AG04450 (cell line): ENCODE measurements at regions of chr20 and their contacts with region 1.

Region 1: GRCh38 chr20:49245921-49246740 is 26.9 kb downstream of the DDX27 start:
- DNase-seq: peak; percentile 20
- H3K4me3 ChIP-seq: no peak overlapping the region
- H3K27ac ChIP-seq: no peak overlapping the region
- H3K27me3 ChIP-seq: no peaks in the 10 kb centered on the region
- CTCF ChIP-seq: peak; percentile 89

Region 2: DNA sequence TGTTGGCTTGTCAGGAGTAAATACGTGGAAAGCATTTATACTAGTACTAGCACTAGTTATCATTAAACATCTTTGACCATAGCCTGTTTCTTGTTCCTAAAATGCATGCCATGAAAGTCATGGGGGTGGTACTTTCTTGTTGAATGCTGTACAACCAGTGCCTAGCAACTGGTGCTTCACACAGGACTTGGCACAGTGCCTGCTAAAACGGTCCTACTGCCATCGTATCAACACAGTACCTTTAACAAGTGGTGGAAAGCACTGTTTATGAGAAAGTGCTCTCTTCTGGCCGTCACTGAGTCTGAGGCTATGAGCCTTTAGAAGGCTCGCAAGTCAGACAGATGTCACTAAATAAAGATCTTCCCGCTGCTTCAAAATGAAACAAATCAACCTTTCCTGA is 10.1 kb after region 1 on chr20:
- CTCF ChIA-PET with region 1: interaction called, 17 read pairs
- POLR2A ChIA-PET with region 1: no interaction called
- DNase-seq: no peak
- H3K4me3 ChIP-seq: no peak overlapping the region
- H3K27ac ChIP-seq: no peak overlapping the region
- H3K27me3 ChIP-seq: no peaks in the 10 kb centered on the region
- CTCF ChIP-seq: no peak

Region 3: DNA sequence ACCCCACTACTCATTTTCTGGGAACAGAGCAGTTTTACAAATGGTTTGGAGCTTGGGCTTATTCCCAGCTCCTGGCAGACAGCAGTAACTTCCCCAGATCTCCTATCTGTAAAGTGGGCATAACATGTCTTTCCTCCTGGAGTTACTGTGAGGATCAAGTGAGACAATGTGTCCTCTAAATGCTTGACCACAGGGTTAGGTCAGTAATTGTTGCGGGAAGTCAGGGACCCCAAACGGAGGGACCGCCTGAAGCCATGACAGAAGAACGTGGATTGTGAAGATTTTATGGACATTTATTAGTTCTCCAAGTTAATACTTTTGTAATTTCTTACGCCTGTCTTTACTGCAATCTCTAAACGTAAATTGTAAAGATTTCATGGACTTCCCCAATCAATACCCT is 47.0 kb after region 1 on chr20:
- CTCF ChIA-PET with region 1: no interaction called
- POLR2A ChIA-PET with region 1: no interaction called
- DNase-seq: no peak
- H3K4me3 ChIP-seq: no peak overlapping the region
- H3K27ac ChIP-seq: no peak overlapping the region
- H3K27me3 ChIP-seq: no peaks in the 10 kb centered on the region
- CTCF ChIP-seq: no peak

Region 4: GRCh38 chr20:49323622-49324238 is 77.6 kb after region 1 on chr20:
- CTCF ChIA-PET with region 1: interaction called, 22 read pairs
- POLR2A ChIA-PET with region 1: interaction called, 3 read pairs
- DNase-seq: peak; percentile 30
- H3K4me3 ChIP-seq: no peak overlapping the region
- H3K27ac ChIP-seq: no peak overlapping the region
- H3K27me3 ChIP-seq: peaks cover 61% of the 10 kb centered on the region
- CTCF ChIP-seq: peak; percentile 48